Thyroid gland (tissue), 4 donors: ENCODE measurements at regions of chr12 and their contacts with region 1.

Region 1: DNA sequence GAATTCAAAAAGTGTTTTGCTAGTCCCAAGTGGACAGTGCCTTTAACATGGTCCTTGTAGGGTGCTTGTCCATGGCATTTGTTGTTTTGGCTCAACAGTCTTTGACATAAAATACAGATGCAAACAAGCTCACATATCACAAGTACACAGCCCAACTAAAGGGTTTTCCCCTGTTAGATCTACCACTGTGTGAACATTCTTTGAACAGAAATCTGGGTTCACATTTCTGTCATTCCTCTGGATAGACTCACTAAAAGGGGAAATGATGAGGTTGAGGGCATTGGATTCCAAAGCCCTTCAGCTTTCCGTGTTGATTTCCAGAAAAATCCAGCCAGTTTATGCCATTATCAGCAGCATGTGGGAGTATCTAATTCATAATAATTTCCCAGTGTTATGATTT is 54.1 kb downstream of the EP400 start:
- DNase-seq: no peak
- H3K4me3 ChIP-seq: no peak overlapping the region
- H3K27ac ChIP-seq: no peak overlapping the region
- H3K4me1 ChIP-seq: no peaks in the 10 kb centered on the region
- H3K27me3 ChIP-seq: no peaks in the 10 kb centered on the region
- CTCF ChIP-seq: no peak
- POLR2A ChIP-seq: no peak

Region 2: DNA sequence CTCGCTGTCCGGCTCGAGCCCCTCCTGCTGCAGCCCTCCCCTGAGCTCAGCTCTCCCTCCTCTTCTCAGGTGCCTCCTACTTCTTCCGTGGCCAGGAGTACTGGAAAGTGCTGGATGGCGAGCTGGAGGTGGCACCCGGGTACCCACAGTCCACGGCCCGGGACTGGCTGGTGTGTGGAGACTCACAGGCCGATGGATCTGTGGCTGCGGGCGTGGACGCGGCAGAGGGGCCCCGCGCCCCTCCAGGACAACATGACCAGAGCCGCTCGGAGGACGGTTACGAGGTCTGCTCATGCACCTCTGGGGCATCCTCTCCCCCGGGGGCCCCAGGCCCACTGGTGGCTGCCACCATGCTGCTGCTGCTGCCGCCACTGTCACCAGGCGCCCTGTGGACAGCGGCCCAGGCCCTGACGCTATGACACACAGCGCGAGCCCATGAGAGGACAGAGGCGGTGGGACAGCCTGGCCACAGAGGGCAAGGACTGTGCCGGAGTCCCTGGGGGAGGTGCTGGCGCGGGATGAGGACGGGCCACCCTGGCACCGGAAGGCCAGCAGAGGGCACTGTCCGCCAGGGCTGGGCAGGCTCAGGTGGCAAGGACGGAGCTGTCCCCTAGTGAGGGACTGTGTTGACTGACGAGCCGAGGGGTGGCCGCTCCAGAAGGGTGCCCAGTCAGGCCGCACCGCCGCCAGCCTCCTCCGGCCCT is 152.8 kb before region 1 on chr12:
- intact Hi-C with region 1: loop called (anchors 5 kb)
- DNase-seq: peak; percentile 48 to 51
- H3K4me3 ChIP-seq: no peak overlapping the region
- H3K27ac ChIP-seq: no peak overlapping the region
- H3K4me1 ChIP-seq: no peaks in the 10 kb centered on the region
- H3K27me3 ChIP-seq: no peaks in the 10 kb centered on the region
- CTCF ChIP-seq: peak in 4 of 6 experiments; percentile 49 to 91 (median 54)
- POLR2A ChIP-seq: no peak

Region 3: DNA sequence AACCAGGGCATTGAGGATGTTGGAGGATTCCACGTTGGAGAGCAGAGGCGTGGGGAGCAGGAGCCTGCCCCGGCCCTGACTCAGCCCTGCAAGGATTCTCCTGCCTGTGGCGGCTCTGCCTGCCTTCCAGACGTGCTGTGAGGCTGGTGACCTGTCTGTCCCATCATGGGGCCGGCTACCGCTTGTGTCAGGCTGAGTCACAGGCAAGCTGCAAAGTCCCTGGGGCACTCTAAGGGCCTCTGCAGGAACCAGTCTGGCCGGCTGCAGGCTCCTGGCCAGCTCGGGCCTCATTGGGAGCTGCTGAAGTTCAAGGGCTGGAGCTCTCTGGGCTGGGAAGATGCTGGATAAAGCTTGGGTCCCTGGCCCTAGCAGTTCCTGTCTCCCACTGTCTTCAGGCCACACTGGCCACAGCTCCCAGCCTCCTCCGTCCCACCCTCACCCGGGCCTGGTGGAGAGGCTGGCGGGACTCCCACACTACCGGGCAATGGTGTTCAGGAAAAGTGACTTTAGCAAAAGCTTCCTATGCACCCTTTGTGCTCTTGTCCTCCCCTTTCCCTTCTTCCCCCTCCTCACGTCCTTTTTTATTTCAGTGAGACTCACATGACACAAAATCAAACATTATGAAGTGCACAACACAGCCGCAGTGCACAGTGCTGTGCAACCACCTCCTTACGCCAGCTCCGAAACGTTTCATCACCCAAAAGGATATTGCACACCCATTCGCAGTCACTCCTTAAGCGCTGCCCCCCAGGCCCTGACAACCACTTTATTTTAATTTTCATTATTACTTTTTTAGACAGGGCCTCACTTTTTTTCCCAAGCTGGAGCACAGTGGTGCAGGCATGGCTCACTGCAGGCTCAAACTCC is 131.4 kb before region 1 on chr12:
- intact Hi-C with region 1: no loop called
- DNase-seq: no peak
- H3K4me3 ChIP-seq: no peak overlapping the region
- H3K27ac ChIP-seq: no peak overlapping the region
- H3K4me1 ChIP-seq: no peaks in the 10 kb centered on the region
- H3K27me3 ChIP-seq: no peaks in the 10 kb centered on the region
- CTCF ChIP-seq: no peak
- POLR2A ChIP-seq: no peak